K562 (cell line): ENCODE measurements at regions of chr2 and their contacts with region 1.

Region 1: DNA sequence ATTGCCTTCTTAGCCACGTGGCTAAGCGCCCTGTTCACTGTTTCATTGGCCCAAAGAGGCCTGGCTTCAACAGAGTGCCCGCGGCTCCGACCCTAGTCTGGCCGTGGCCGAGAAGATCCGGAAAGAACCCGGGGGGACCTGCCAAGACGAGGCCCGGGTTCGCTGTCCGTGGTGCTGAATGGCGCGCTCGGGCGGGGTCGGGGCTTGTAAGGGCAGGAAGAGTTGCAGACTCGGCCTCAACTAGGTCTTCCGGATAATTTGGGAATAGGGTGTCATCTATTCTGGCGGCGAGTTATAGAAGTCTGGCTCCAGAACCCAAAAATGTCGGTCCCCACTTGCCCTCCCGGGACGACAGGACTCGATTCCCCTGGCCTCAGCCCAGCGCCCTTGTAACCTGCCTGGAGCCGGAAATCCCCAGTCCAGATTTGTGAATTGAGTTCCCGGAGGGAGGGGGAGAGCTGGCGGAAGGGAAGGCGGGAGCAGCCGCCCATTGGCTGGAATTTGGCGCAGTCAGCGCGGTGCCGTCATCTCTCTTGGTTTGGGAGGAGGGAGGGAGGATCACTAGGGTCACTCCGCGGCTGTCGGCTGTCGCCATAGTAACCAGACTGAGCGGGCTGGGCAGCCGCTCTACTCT is 3.5 kb downstream of the CDK5R2 start:
- DNase-seq: peak; percentile 70 to 79 (median 71)
- ATAC-seq: peak; percentile 80
- H3K4me3 ChIP-seq: no peak overlapping the region
- H3K27ac ChIP-seq: no peak overlapping the region
- H3K4me1 ChIP-seq: peaks cover 11 to 31% of the 10 kb centered on the region in 2 experiments; a peak in 4 of 5 replicates
- H3K27me3 ChIP-seq: peaks cover 7 to 27% of the 10 kb centered on the region in 2 experiments; a peak in 4 of 5 replicates
- CTCF ChIP-seq: no peak
- EP300 ChIP-seq: no peak
- POLR2A ChIP-seq: no peak
- RAD21 ChIP-seq: no peak

Region 2: GRCh38 chr2:218908721-218909619 is 54.0 kb before region 1 on chr2:
- CTCF ChIA-PET with region 1: no interaction called
- POLR2A ChIA-PET with region 1: no interaction called
- in situ Hi-C with region 1: no loop called
- intact Hi-C with region 1: loop called (anchors 5 kb)
- DNase-seq: peak; percentile 86 to 94 (median 87)
- ATAC-seq: peak; percentile 96
- H3K4me3 ChIP-seq: peak overlapping the region; percentile 65
- H3K27ac ChIP-seq: peak overlapping the region; percentile 89
- H3K4me1 ChIP-seq: peaks cover 10 to 11% of the 10 kb centered on the region in 2 experiments; a peak in 3 of 5 replicates
- H3K27me3 ChIP-seq: peaks cover 7 to 13% of the 10 kb centered on the region in 2 experiments; a peak in 4 of 5 replicates
- CTCF ChIP-seq: peak in 1 of 3 experiments; percentile 31; a peak in 2 of 6 replicates
- EP300 ChIP-seq: no peak
- POLR2A ChIP-seq: peak; percentile 88
- RAD21 ChIP-seq: no peak; a peak in 1 of 4 replicates